Dorsolateral prefrontal cortex (tissue), 120 donors: ENCODE measurements at regions of chr15 and their contacts with region 1.

Region 1: GRCh38 chr15:51622604-51623370 is at the start of gene DMXL2:
- DNase-seq: peak; percentile 73 to 93 (median 87)
- H3K4me3 ChIP-seq: peak within 1 kb of the TSS; percentile 61 to 98 (median 86)
- H3K27ac ChIP-seq: peak within 1 kb of the TSS; percentile 15 to 97 (median 89)
- H3K27me3 ChIP-seq: no peaks in the 10 kb centered on the region
- CTCF ChIP-seq: peak in 13 of 56 donors; percentile 4 to 37 (median 21)
- total RNA-seq, gene DMXL2: 41.3 to 121 (median 94.2) TPM

Region 2: DNA sequence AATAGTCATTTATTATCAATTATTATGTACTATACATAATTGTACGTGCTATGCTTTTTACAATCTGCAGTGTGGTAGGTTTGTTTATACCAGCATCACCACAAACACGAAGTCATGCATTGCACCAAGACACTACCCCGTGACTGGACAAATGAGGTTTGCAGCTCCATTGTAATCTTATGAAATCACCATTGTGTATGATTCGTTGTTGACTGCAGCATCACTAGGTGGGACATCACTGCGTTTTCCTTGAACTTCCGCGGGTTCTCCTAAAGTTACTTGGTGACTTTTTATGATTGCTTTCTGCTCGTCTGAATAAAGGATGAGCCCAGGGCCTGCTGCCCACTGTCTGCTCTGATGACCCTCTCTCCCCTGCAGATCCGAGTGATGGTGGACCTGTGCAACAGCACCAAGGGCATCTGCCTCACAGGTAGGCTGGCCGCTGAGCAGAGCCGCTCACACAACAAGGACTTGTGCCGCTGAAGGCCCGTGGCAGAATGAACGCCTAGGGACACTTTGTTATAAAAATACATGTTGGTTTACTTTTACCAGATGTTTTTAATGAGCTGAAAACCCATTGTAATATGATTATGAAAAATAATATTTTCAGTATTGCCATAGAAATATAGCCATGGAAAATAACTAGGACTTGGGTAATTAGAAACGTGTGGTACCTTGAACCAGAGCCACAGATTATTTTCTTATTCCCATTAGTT is 245.6 kb before region 1 on chr15:
- intact Hi-C with region 1: no loop called
- DNase-seq: peak in 1 of 10 donors; percentile 57
- H3K4me3 ChIP-seq: peak overlapping the region in 40 of 59 donors; percentile 0 to 64 (median 34)
- H3K27ac ChIP-seq: peak overlapping the region in 57 of 59 donors; percentile 2 to 97 (median 84)
- H3K27me3 ChIP-seq: no peaks in the 10 kb centered on the region
- CTCF ChIP-seq: peak in 5 of 56 donors; percentile 10 to 43 (median 23)

Region 3: GRCh38 chr15:51726351-51727073 is 103.7 kb after region 1 on chr15:
- intact Hi-C with region 1: loop called in 1 of 2 experiments (anchors 5 kb)
- DNase-seq: no peak
- H3K4me3 ChIP-seq: no peak overlapping the region
- H3K27ac ChIP-seq: peak overlapping the region in 18 of 59 donors; percentile 4 to 51 (median 22)
- H3K27me3 ChIP-seq: no peaks in the 10 kb centered on the region
- CTCF ChIP-seq: no peak